Vagina (tissue), 2 donors: ENCODE measurements at regions of chr1 and their contacts with region 1.

Region 1: DNA sequence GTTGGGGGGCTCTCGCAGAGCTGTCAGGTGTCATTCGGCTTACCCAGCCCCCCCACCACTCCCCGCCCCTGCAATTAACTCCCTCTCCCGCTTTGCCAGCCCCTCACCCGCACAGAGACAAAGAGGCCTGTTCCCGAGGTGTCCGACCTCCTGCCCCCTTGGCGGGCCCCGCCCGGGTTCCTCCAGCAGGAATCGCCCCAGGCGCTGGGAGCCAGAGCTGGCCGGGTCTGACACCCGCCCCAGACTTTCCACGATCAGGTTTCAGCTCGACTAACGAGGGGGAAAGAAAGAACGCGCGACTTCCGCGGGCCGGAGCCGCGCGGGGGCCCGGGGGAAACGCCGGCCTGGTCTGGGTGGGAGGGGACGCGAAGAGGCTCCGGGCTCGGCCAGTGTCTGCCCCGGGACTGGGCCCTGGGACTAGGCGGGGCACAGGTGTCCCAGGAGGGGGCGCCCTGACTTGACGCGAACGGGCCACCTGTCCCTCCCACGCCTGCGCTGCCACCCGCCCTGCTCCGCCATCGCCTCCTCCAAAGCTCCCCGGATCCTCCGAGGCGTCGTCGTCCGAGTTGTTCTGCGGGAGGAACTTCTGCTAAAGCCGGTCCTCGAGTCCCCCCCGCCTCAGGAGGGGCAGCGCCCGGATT is 36.4 kb upstream of the HHAT start:
- DNase-seq: no peak
- H3K4me3 ChIP-seq: peak overlapping the region; percentile 42 to 61
- H3K27ac ChIP-seq: peak overlapping the region; percentile 83
- H3K4me1 ChIP-seq: peaks cover 52% of the 10 kb centered on the region
- H3K27me3 ChIP-seq: no peaks in the 10 kb centered on the region
- CTCF ChIP-seq: peak in 1 of 3 experiments; percentile 23
- POLR2A ChIP-seq: no peak

Region 2: DNA sequence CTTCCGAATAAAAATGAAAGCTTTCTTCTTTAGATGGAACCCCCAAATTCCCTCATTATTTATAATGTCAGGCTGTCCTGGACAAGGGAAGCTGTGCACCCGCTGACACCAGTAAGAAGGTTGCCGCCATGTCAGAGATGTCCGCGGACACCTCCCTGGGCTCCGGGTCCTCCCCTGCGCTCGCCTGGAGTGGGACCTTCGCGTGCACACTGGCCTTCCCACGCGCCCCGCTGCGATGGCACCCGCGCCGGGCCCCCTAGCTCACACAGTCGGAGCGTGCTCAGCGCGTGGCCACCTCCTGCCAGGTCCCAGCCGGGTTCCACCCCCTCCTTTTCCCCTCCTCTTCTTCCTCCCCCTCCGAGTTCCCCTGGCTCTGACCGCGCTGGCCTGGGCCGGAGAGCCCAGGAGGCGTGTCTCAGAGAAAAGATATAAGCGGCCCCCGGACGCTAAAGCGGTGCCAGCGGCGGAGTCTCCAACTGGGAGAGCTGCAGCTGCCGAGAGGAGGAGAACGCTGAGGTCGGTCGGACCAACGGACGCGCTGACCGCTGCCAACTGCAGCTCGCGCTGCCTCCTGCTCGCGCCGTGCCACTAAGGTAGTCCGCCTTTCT is 617.3 kb before region 1 on chr1 and contains the start of gene G0S2:
- intact Hi-C with region 1: loop called (anchors 5 kb)
- DNase-seq: peak in 1 of 2 donors; percentile 87
- H3K4me3 ChIP-seq: peak within 1 kb of the TSS; percentile 30 to 50
- H3K27ac ChIP-seq: peak within 1 kb of the TSS; percentile 66
- H3K4me1 ChIP-seq: peaks cover 36% of the 10 kb centered on the region
- H3K27me3 ChIP-seq: no peaks in the 10 kb centered on the region
- CTCF ChIP-seq: no peak
- POLR2A ChIP-seq: peak in 1 of 2 donors; percentile 58
- total RNA-seq, gene G0S2: 187 TPM

Region 3: DNA sequence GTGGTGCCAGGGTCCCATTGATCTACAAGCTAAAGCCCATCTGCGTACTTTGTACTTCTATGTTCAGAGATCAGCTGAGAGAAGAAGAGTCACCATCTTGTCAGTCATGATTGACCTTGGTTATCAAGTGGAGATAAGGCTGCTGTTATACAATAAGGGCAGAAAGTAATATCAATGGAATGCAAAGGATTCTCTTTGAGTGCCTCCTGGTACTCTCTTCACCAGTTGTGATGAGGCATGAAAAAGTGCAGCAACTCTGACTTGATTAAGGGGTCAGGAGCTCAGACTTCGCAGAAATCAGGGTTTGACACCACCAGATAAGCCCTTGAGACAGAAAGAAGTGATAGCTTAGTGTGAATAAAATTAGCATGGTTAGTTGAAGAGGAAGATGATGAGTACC is 380.0 kb before region 1 on chr1:
- intact Hi-C with region 1: no loop called
- DNase-seq: no peak
- H3K4me3 ChIP-seq: no peak overlapping the region
- H3K27ac ChIP-seq: no peak overlapping the region
- H3K4me1 ChIP-seq: no peaks in the 10 kb centered on the region
- H3K27me3 ChIP-seq: no peaks in the 10 kb centered on the region
- CTCF ChIP-seq: no peak
- POLR2A ChIP-seq: no peak

Region 4: DNA sequence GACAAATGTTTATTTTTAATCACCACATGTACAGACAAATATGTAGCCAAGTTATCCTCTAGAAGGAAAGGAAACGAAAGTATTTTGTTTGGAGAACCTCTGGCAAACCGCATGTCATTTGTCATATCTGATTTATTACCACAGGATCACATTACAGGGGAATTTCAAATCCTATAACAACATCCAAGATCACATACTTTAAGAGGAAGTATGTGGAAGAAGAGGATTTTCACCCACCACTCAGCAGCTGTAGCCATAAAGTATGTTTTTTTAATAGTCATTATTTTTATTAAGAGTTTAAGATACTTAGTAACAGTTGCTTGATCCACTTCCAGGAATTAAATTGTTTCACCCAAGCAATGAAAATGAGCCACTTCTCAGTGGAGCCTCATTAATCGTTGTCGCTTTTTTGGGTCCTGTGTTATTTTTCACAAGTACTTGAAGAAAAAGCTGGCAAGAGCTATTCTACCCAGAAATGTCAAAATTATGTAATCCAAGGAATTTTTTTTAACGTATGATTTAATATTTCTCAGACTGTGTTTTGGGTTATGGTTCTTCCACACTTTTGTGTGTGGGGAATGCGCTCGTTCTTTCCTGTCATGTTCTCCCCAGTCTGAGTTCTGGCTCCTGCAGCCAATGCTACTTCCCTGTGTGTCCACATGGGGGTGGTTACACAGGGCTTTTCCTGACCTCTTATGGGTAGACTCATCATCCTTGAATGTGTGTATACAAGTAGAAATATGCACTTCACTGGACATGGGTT is 52.8 kb before region 1 on chr1:
- intact Hi-C with region 1: loop called (anchors 5 kb)
- DNase-seq: no peak
- H3K4me3 ChIP-seq: no peak overlapping the region
- H3K27ac ChIP-seq: no peak overlapping the region
- H3K4me1 ChIP-seq: peaks cover 37% of the 10 kb centered on the region
- H3K27me3 ChIP-seq: no peaks in the 10 kb centered on the region
- CTCF ChIP-seq: no peak
- POLR2A ChIP-seq: no peak